IMR-90 (cell line): ENCODE measurements at regions of chr12 and their contacts with region 1.

Region 1: GRCh38 chr12:49623142-49623904 is at the start of gene PRPF40B:
- DNase-seq: peak; percentile 73
- ATAC-seq: peak; percentile 92
- H3K4me3 ChIP-seq: peak within 1 kb of the TSS; percentile 60
- H3K27ac ChIP-seq: peak within 1 kb of the TSS; percentile 24
- H3K4me1 ChIP-seq: peaks cover 11% of the 10 kb centered on the region
- H3K27me3 ChIP-seq: no peaks in the 10 kb centered on the region
- CTCF ChIP-seq: peak; percentile 73
- POLR2A ChIP-seq: peak; percentile 81
- RAD21 ChIP-seq: peak; percentile 19
- total RNA-seq, gene PRPF40B: 3.9 and 5.0 TPM in 2 replicates

Region 2: GRCh38 chr12:48995061-48995879 is 628.1 kb before region 1 on chr12:
- CTCF ChIA-PET with region 1: no interaction called
- POLR2A ChIA-PET with region 1: no interaction called
- dilution Hi-C with region 1: no loop called
- in situ Hi-C with region 1: no loop called
- intact Hi-C with region 1: no loop called
- DNase-seq: peak; percentile 73
- ATAC-seq: peak; percentile 77
- H3K4me3 ChIP-seq: no peak overlapping the region
- H3K27ac ChIP-seq: no peak overlapping the region
- H3K4me1 ChIP-seq: peaks cover 12% of the 10 kb centered on the region
- H3K27me3 ChIP-seq: peaks cover 44% of the 10 kb centered on the region
- CTCF ChIP-seq: peak; percentile 85
- POLR2A ChIP-seq: no peak
- RAD21 ChIP-seq: peak; percentile 84

Region 3: GRCh38 chr12:49599961-49600360 is 23.4 kb before region 1 on chr12:
- CTCF ChIA-PET with region 1: interaction called, 3 read pairs
- POLR2A ChIA-PET with region 1: interaction called, 10 read pairs
- dilution Hi-C with region 1: no loop called
- in situ Hi-C with region 1: no loop called
- intact Hi-C with region 1: no loop called
- DNase-seq: no peak
- ATAC-seq: no peak
- H3K4me3 ChIP-seq: no peak overlapping the region
- H3K27ac ChIP-seq: no peak overlapping the region
- H3K4me1 ChIP-seq: no peaks in the 10 kb centered on the region
- H3K27me3 ChIP-seq: no peaks in the 10 kb centered on the region
- CTCF ChIP-seq: no peak
- POLR2A ChIP-seq: no peak
- RAD21 ChIP-seq: no peak

Region 4: DNA sequence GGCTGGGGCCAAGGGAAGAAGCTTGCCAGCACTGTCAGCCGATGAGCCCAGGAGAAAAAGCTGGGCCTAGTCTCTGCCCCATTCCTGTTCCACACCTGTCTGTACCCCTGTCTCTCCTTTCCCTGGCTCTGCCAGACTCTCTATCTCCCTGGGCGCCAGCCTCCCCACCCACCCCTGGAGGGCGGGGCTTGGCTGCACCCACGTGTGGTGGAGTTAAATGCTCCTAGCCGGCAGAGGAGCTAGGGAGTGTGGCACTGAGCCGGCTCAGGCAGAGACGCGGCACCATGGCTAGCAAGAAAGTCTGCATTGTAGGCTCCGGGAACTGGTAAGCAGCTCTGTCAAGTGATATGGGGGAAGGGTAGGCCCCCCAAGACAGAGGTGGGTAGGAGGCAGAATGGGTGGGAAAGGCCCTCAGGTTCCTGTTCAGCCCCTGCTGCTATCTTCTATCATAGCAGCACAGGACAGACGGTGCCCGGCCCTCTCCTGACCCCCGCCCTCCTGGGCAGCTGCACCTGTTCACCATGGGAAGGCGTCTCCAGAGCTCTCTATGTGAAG is 480.5 kb after region 1 on chr12 and contains the start of gene GPD1:
- CTCF ChIA-PET with region 1: no interaction called
- POLR2A ChIA-PET with region 1: no interaction called
- dilution Hi-C with region 1: no loop called
- in situ Hi-C with region 1: no loop called
- intact Hi-C with region 1: no loop called
- DNase-seq: peak; percentile 28
- ATAC-seq: peak; percentile 77
- H3K4me3 ChIP-seq: no peak within 1 kb of the TSS
- H3K27ac ChIP-seq: no peak within 1 kb of the TSS
- H3K4me1 ChIP-seq: no peaks in the 10 kb centered on the region
- H3K27me3 ChIP-seq: peaks cover 4% of the 10 kb centered on the region; the same call in 1 of the 2 replicates
- CTCF ChIP-seq: no peak
- POLR2A ChIP-seq: no peak
- RAD21 ChIP-seq: no peak
- total RNA-seq, gene GPD1: 0.18 TPM in 1 of 2 replicates, not detected in the other